ENCODE measurements at regions of chr22 and their contacts with region 1.

Region 1: GRCh38 chr22:34225278-34225677 is 305.0 kb upstream of the LARGE1 start:
- DNase-seq: no peak

Region 2: GRCh38 chr22:34301569-34301968 is 76.3 kb after region 1 on chr22:
- intact Hi-C with region 1: loop called (anchors 5 kb)
- DNase-seq: no peak

Measured in cardiac septum (tissue), 1 donor.